CD8-positive, alpha-beta T cell (primary cell): ENCODE measurements at regions of chr12 and their contacts with region 1.

Region 1: DNA sequence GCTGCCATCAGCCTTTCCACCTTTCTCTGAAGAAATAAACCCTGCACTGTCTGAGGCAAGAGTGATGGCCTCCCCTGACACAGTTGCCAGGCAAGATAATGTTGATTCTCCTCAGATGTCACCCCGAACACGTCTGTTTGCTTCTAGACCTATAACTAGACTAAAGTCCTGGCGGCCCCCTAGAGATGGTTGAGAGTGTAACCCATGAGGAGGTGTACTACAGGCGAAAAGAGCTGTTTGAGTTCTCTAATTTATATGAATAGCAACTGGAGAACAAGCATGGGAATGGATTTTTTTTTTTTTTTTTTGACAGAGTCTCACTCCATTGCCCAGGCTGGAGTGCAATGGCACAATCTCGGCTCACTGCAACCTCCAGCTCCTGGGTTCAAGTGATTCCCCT is 33.0 kb upstream of the ATF7IP start:
- DNase-seq: no peak
- ATAC-seq: no peak
- H3K4me3 ChIP-seq: no peak overlapping the region
- H3K4me3 Mint-ChIP-seq: no peak overlapping the region
- H3K27ac ChIP-seq: no peak overlapping the region
- H3K27ac Mint-ChIP-seq: no peak overlapping the region
- H3K4me1 ChIP-seq: no peaks in the 10 kb centered on the region
- H3K4me1 Mint-ChIP-seq: no peaks in the 10 kb centered on the region
- H3K27me3 ChIP-seq: no peaks in the 10 kb centered on the region
- H3K27me3 Mint-ChIP-seq: no peaks in the 10 kb centered on the region
- CTCF ChIP-seq: no peak

Region 2: GRCh38 chr12:14284184-14284722 is 48.2 kb before region 1 on chr12:
- CTCF ChIA-PET with region 1: no interaction called
- POLR2A ChIA-PET with region 1: no interaction called
- intact Hi-C with region 1: loop called in 1 of 2 experiments (anchors 5 kb)
- DNase-seq: peak in 1 of 9 experiments; percentile 24
- ATAC-seq: no peak
- H3K4me3 ChIP-seq: no peak overlapping the region
- H3K4me3 Mint-ChIP-seq: no peak overlapping the region
- H3K27ac ChIP-seq: no peak overlapping the region
- H3K27ac Mint-ChIP-seq: no peak overlapping the region
- H3K4me1 ChIP-seq: no peaks in the 10 kb centered on the region
- H3K4me1 Mint-ChIP-seq: no peaks in the 10 kb centered on the region
- H3K27me3 ChIP-seq: no peaks in the 10 kb centered on the region
- H3K27me3 Mint-ChIP-seq: no peaks in the 10 kb centered on the region
- CTCF ChIP-seq: no peak

Region 3: DNA sequence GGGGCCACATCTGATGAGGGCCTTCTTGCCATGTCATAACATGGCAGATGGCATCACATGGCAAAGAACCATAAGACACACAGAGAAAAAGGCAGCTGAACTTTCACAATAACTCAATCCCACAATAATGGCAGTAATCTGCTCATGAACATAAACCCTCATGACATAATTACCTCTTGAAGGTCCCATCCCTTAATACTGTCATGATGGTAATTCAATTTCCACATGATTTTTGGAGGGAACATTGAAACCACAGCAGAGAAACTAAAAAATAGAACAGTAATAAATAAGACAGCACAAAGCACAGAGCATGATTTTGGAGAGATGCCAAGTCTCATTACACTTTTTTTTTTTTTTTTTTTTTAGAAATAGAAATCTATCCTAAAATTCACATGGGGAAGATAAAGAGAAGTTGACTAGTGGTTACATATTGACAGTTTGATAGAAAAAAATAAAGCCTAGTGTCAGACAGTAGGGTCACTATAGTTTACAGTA is 28.8 kb before region 1 on chr12:
- CTCF ChIA-PET with region 1: no interaction called
- POLR2A ChIA-PET with region 1: no interaction called
- intact Hi-C with region 1: loop called in 1 of 2 experiments (anchors 5 kb)
- DNase-seq: no peak
- ATAC-seq: no peak
- H3K4me3 ChIP-seq: no peak overlapping the region
- H3K4me3 Mint-ChIP-seq: no peak overlapping the region
- H3K27ac ChIP-seq: no peak overlapping the region
- H3K27ac Mint-ChIP-seq: no peak overlapping the region
- H3K4me1 ChIP-seq: no peaks in the 10 kb centered on the region
- H3K4me1 Mint-ChIP-seq: peaks cover 5% of the 10 kb centered on the region
- H3K27me3 ChIP-seq: no peaks in the 10 kb centered on the region
- H3K27me3 Mint-ChIP-seq: no peaks in the 10 kb centered on the region
- CTCF ChIP-seq: no peak

Region 4: DNA sequence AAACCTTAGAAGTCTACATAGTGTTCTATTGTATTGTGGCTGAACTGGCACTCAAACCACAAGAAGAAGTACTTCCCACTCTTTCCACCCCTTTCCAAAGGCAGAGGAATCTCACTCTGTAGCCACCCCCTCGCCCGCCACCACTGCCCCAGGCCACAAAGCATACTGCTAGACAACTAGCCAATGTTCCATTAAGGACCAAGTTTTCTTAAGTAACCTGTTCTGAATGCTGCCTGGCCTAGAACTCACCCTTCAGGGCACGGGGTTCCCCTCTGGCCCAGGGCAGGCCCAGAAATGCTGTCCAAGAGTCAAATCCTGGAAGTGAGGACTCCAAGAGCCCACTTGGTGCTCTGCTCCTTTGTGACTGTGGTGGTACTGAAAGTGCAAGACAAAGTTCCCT is 974.1 kb after region 1 on chr12:
- CTCF ChIA-PET with region 1: no interaction called
- POLR2A ChIA-PET with region 1: no interaction called
- intact Hi-C with region 1: no loop called
- DNase-seq: no peak
- ATAC-seq: no peak
- H3K4me3 ChIP-seq: no peak overlapping the region
- H3K4me3 Mint-ChIP-seq: no peak overlapping the region
- H3K27ac ChIP-seq: no peak overlapping the region
- H3K27ac Mint-ChIP-seq: no peak overlapping the region
- H3K4me1 ChIP-seq: no peaks in the 10 kb centered on the region
- H3K4me1 Mint-ChIP-seq: no peaks in the 10 kb centered on the region
- H3K27me3 ChIP-seq: no peaks in the 10 kb centered on the region
- H3K27me3 Mint-ChIP-seq: no peaks in the 10 kb centered on the region
- CTCF ChIP-seq: no peak